MCF 10A (cell line): ENCODE measurements at regions of chr2 and their contacts with region 1.

Region 1: DNA sequence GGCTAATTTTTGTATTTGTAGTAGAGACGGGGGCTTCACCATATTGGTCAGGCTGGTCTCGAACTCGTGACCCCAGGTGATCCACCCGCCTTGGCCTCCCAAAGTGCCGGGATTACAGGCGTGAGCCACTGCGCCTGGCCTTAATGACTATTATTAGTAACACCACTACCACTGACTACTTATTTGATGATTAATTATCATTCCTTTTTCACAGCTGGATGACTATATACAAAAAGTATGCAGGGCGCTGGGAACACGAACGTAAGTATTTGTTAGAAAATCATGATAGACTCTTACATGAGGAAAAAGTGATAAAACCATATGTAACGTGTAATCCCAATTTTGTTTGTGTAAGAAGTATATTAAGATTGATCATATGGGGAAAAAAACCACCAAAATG is 21.6 kb downstream of the DARS1 start:
- DNase-seq: peak; percentile 32
- H3K4me3 Mint-ChIP-seq: no peak overlapping the region
- H3K27ac Mint-ChIP-seq: peak overlapping the region; percentile 63
- H3K4me1 Mint-ChIP-seq: peaks cover 8% of the 10 kb centered on the region
- H3K27me3 Mint-ChIP-seq: no peaks in the 10 kb centered on the region
- CTCF ChIP-seq: no peak

Region 2: GRCh38 chr2:135531231-135532228 is 432.3 kb before region 1 on chr2 and contains the start of gene R3HDM1:
- CTCF ChIA-PET with region 1: no interaction called
- POLR2A ChIA-PET with region 1: no interaction called
- intact Hi-C with region 1: no loop called
- DNase-seq: peak; percentile 100
- H3K4me3 Mint-ChIP-seq: no peak within 1 kb of the TSS
- H3K27ac Mint-ChIP-seq: no peak within 1 kb of the TSS
- H3K4me1 Mint-ChIP-seq: peaks cover 6% of the 10 kb centered on the region
- H3K27me3 Mint-ChIP-seq: no peaks in the 10 kb centered on the region
- CTCF ChIP-seq: peak; percentile 16
- total RNA-seq, gene R3HDM1: 52.4 and 54.6 TPM in 2 replicates

Region 3: DNA sequence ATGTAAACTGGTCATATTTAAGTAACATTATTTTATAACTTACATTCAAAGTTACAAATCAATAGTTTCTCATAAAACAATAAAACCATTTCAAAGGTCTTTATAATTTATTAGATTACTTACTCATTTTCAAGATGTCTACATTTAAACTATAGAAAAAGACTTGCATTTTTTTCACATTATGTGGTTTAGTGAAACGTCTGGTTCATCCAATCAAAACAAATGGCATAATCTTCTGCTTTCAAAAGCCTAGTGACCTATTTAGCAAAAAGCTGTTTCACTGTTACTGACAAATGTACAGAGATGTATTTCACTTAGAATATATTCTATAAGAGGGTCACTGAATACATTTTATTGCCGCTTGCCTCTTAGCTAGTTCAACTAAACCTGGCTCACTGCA is 38.3 kb before region 1 on chr2:
- CTCF ChIA-PET with region 1: no interaction called
- POLR2A ChIA-PET with region 1: no interaction called
- intact Hi-C with region 1: no loop called
- DNase-seq: no peak
- H3K4me3 Mint-ChIP-seq: no peak overlapping the region
- H3K27ac Mint-ChIP-seq: no peak overlapping the region
- H3K4me1 Mint-ChIP-seq: no peaks in the 10 kb centered on the region
- H3K27me3 Mint-ChIP-seq: no peaks in the 10 kb centered on the region
- CTCF ChIP-seq: no peak

Region 4: DNA sequence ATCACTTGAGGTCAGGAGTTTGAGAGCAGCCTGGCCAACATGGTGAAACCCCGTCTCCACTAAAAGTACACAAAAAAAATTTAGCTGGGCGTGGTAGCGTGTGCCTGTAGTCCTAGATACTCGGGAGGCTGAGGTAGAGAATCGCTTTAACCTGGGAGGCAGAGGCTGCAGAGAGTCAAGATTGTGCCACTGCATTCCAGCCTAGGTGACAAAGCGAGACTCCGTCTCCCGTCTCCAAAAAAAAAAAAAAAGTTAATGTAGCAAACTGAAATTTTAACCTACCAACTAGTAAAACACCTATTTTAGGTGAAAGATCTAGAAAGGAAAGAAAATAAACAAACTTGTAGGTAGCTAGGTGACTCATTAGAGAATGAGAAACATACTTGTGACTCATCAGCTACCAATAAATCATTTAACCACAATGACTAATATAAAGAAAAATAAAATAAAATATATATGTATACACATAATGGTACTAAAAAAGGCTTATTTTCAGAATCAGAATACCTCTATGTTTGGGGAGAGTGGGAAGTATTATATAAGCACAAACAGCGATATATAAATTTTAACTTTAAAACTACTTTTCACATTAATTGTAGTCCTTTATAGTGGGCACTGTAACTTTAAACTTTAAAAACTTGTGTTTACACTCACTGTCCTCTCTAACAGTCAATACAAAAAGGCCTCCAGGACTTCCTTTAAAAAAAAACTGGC is 15.0 kb before region 1 on chr2:
- CTCF ChIA-PET with region 1: interaction called, 6 read pairs
- POLR2A ChIA-PET with region 1: interaction called, 15 read pairs
- intact Hi-C with region 1: no loop called
- DNase-seq: peak; percentile 86
- H3K4me3 Mint-ChIP-seq: peak overlapping the region; percentile 68
- H3K27ac Mint-ChIP-seq: peak overlapping the region; percentile 97
- H3K4me1 Mint-ChIP-seq: peaks cover 36% of the 10 kb centered on the region
- H3K27me3 Mint-ChIP-seq: no peaks in the 10 kb centered on the region
- CTCF ChIP-seq: no peak

Region 5: DNA sequence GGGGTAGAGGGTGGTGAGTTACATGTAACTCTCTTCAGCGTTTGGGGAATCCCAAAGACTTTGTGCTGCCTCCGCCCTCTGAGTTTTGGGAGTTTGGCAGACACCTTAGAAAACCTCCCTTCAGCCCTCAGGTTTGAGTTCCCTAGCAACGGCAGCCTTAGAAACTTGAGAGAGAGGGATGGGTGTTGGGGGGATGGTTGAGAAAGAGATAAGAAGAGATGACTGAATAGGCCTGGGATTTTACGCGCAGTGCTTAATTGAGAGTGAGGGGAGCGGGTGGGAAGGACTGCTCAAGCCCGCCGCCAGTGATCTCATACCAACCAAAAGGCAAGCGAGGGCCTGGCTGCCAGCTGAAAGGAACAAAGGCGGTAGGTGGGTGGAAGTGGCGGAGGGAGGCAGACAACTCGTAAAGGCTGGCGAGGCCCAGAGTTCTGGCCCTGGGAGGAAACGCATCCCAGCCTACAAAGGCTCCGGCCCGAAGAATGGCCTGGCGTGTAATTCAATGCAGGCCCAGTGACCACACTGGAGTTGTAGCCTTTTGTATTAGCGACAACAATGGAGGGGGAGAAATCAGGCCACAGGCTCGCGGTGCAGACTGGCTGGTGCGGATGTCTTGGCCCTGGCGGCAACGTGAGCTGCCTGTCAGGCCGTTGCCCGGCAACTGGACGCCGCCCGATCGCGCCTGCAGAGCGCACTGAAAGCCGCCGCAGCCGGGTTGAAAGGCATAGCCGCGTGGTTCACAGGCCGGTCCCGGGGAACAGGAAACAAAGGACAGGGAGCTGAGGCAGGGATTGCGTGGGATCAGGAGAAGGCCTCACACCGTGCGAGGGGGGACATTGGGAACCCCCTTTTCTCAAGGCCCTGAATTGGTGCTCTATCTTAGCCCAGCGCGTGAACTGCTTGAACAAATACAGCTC is 61.5 kb after region 1 on chr2:
- CTCF ChIA-PET with region 1: no interaction called
- POLR2A ChIA-PET with region 1: no interaction called
- intact Hi-C with region 1: no loop called
- DNase-seq: no peak
- H3K4me3 Mint-ChIP-seq: no peak overlapping the region
- H3K27ac Mint-ChIP-seq: no peak overlapping the region
- H3K4me1 Mint-ChIP-seq: peaks cover 4% of the 10 kb centered on the region
- H3K27me3 Mint-ChIP-seq: no peaks in the 10 kb centered on the region
- CTCF ChIP-seq: no peak